ENCODE measurements at regions of chr1 and their contacts with region 1.

Region 1: DNA sequence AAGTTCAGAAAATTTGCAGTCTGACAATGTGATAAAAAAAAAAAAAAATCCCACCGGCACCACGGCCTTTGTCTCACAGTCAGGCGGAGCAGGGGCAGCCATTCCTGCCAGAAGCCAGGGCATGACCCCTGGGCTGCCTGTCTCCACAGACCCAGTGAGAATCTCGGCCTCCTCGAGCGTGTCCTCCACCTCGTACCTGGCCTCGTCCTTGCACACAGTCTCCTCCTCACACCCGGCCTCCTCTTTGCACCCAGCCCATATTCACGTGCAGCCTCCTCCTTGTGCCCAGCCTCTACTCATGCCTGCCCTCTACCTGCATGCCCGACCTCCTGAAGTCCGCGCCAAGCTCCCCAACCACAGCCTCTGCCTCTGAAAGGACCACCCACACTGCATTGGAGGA is 182.0 kb downstream of the AGBL4 start:
- DNase-seq: no peak
- ATAC-seq: no peak
- H3K4me3 ChIP-seq: no peak overlapping the region
- H3K27ac ChIP-seq: no peak overlapping the region
- H3K4me1 ChIP-seq: no peaks in the 10 kb centered on the region
- H3K27me3 ChIP-seq: no peaks in the 10 kb centered on the region
- CTCF ChIP-seq: no peak
- POLR2A ChIP-seq: no peak

Region 2: GRCh38 chr1:48960320-48960719 is 881.4 kb before region 1 on chr1:
- intact Hi-C with region 1: loop called in 1 of 10 experiments (anchors 5 kb)
- DNase-seq: no peak
- ATAC-seq: no peak
- H3K4me3 ChIP-seq: no peak overlapping the region
- H3K27ac ChIP-seq: no peak overlapping the region
- H3K4me1 ChIP-seq: no peaks in the 10 kb centered on the region
- H3K27me3 ChIP-seq: no peaks in the 10 kb centered on the region
- CTCF ChIP-seq: no peak
- POLR2A ChIP-seq: no peak

Measured in heart left ventricle (tissue), 16 donors.